ENCODE measurements at regions of chr15 and their contacts with region 1.

Region 1: DNA sequence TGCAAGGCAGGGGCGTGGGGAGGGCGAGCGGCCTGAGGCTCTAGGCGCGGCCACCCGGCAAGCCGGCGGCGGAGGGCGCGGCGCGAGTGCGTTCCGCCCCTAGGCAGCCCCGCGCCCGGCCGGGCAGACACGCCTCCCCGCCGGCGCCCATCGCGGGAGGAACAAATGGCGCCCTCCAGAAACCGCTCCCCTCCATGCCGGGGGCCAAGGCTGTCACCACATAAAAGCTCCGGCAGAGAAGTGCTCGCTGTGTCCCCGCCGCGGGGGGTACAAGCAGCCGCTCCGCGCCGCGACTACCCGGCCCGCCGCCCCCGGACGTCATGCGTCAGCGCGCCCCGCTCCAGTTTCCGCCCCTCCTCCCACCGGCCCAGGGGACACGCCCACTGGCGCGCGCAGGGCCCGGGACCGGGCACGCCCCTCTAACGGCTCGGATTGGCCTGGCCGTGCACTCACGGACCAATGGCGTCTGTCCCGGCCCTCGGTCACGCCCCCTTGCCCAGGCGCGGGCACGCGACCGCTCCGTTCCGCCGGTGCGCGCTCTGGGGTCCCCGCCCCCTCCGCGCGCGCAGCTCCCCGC is 391 bp upstream of the KLF13 start:
- DNase-seq: peak; percentile 97
- H3K4me3 Mint-ChIP-seq: peak overlapping the region; percentile 95
- H3K27ac Mint-ChIP-seq: no peak overlapping the region
- H3K4me1 Mint-ChIP-seq: peaks cover 19% of the 10 kb centered on the region
- H3K27me3 Mint-ChIP-seq: no peaks in the 10 kb centered on the region
- CTCF ChIP-seq: no peak

Region 2: GRCh38 chr15:31236184-31237042 is 89.8 kb before region 1 on chr15:
- CTCF ChIA-PET with region 1: no interaction called
- POLR2A ChIA-PET with region 1: interaction called, 5 read pairs
- intact Hi-C with region 1: loop called (anchors 5 kb)
- DNase-seq: peak; percentile 98
- H3K4me3 Mint-ChIP-seq: peak overlapping the region; percentile 22
- H3K27ac Mint-ChIP-seq: peak overlapping the region; percentile 73
- H3K4me1 Mint-ChIP-seq: peaks cover 20% of the 10 kb centered on the region
- H3K27me3 Mint-ChIP-seq: no peaks in the 10 kb centered on the region
- CTCF ChIP-seq: no peak

Region 3: DNA sequence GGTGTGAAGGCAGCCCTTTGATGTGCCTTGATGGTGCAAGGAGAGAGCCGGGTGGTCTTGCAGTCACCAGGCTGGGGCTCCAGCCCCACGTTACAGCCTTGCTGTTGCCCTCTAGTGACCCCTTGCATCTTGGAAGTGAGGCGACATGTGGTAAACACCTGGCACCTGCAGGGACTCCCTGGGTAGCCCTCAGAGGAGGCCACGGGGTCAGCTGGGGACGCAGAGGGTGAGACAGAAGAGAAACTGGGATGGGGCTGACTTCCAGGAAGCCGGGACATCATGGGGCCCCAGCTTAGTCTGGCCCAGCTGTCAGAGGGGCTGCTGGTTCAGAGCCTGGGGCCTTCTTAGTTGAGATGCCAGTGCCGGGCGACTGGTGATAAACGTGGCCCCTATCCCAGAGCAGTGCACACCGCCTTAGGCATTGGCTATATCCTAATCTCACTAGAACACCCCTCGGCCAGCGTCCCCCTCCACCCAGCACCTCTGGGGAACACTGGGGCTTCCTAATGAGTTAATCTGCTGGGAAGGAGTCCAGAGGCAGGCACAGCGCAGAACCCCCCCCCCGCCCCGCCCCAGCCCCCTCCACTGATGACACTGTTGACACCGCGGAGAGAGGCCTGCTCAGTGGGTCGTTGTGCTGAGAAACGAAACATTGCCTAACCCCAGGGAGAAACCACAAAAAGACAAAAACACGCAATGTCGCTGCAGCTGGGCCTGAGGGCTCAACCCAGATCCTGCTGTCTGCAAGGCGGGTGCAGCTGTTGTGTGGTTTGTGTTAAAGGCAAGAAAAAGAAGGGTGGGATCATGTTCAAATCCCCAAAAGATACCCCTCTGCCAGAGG is 60.2 kb before region 1 on chr15:
- CTCF ChIA-PET with region 1: interaction called, 3 read pairs
- POLR2A ChIA-PET with region 1: interaction called, 6 read pairs
- intact Hi-C with region 1: loop called (anchors 1 kb)
- DNase-seq: no peak
- H3K4me3 Mint-ChIP-seq: no peak overlapping the region
- H3K27ac Mint-ChIP-seq: no peak overlapping the region
- H3K4me1 Mint-ChIP-seq: peaks cover 29% of the 10 kb centered on the region
- H3K27me3 Mint-ChIP-seq: no peaks in the 10 kb centered on the region
- CTCF ChIP-seq: no peak

Region 4: DNA sequence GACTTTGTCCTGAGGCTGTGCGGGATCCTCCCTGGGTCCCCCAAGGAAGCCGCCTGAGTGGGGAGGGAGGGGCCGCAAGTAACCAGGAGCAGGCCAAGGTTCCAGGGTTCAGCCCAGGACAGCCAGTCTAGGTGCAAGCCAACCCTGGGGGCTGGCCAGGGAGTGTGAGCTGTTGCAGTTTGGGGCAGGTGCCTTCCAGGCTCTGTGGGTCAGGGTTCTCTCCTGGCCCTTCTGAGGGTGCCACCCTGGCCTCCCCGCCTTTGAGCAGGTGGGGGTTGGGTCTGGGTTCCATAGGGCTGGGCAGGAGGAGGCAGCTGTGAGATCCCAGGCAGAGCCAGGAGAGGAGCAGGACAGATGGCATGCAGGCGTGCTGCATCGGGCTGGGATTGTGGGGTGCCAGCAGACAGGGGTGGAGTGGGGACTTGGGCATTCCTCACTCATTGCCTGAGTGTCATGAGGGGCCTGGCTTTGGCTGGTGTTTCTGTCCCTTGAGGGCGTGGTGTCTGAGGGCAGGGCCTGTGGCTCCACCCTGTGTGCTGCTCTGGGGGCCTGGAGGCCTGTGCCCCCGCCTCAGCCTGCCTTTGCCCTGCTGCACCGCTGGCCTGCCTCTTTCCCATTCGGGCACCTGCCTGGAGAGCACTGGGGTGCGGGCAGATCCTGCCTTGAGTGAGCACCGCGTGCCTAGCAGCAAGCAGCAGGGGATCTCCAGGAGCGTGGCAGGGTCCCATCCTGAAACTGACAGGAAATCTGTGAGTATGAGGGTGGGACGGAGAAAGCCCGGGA is 18.8 kb after region 1 on chr15:
- CTCF ChIA-PET with region 1: no interaction called
- POLR2A ChIA-PET with region 1: no interaction called
- intact Hi-C with region 1: no loop called
- DNase-seq: no peak
- H3K4me3 Mint-ChIP-seq: no peak overlapping the region
- H3K27ac Mint-ChIP-seq: peak overlapping the region; percentile 81
- H3K4me1 Mint-ChIP-seq: peaks cover 21% of the 10 kb centered on the region
- H3K27me3 Mint-ChIP-seq: no peaks in the 10 kb centered on the region
- CTCF ChIP-seq: no peak